Activated CD8-positive, alpha-beta T cell treated with anti-CD3 and anti-CD28 coated beads for 36 hours (primary cell): ENCODE measurements at regions of chr5 and their contacts with region 1.

Region 1: GRCh38 chr5:171387345-171387969 is at the start of gene NPM1:
- DNase-seq: peak; percentile 97
- ATAC-seq: peak; percentile 84
- H3K4me3 Mint-ChIP-seq: peak within 1 kb of the TSS; percentile 98
- H3K27ac Mint-ChIP-seq: peak within 1 kb of the TSS; percentile 100
- H3K4me1 Mint-ChIP-seq: peaks cover 37% of the 10 kb centered on the region
- H3K27me3 Mint-ChIP-seq: peaks cover 3% of the 10 kb centered on the region
- CTCF ChIP-seq: no peak
- total RNA-seq, gene NPM1: 3,203 to 3,498 TPM

Region 2: GRCh38 chr5:171405601-171406005 is 18.1 kb after region 1 on chr5:
- CTCF ChIA-PET with region 1: interaction called, 5 read pairs
- POLR2A ChIA-PET with region 1: interaction called, 162 read pairs
- intact Hi-C with region 1: no loop called
- DNase-seq: no peak
- ATAC-seq: peak; percentile 48
- H3K4me3 Mint-ChIP-seq: no peak overlapping the region
- H3K27ac Mint-ChIP-seq: no peak overlapping the region
- H3K4me1 Mint-ChIP-seq: peaks cover 46% of the 10 kb centered on the region
- H3K27me3 Mint-ChIP-seq: no peaks in the 10 kb centered on the region
- CTCF ChIP-seq: no peak